GM18951 (cell line): ENCODE measurements at regions of chr7 and their contacts with region 1.

Region 1: GRCh38 chr7:27242555-27243339 is at the start of gene EVX1:
- POLR2A ChIP-seq: no peak

Region 2: DNA sequence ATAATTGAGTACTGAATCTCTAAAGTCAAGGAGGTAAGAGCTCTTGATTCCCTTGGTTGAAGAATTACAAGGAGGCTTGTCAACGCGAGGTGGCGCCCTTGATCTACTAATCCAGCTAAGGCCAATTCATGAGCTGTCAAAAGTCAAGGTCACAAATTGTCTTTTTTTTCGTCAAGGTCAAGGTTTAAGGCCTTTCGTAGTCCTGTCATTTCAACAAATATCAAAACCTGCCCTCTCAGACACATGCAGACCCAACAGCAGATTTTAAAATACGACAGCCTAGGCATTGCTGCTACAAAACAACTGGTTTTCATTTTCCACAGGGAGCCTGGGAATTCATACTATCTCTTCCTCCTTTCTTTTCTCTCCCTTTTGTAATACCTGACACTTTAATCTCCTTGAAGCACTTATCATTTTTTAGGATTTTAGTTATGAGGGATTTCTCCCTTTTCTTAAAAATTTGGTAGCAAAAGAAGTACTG is 46.4 kb before region 1 on chr7:
- in situ Hi-C with region 1: loop called (anchors 10 kb)
- POLR2A ChIP-seq: no peak

Region 3: GRCh38 chr7:27532314-27532713 is 289.6 kb after region 1 on chr7:
- in situ Hi-C with region 1: no loop called
- POLR2A ChIP-seq: no peak